ENCODE measurements at regions of chr1 and their contacts with region 1.

Region 1: GRCh38 chr1:170010443-170010842 is 64.1 kb downstream of the KIFAP3 start:
- DNase-seq: peak; percentile 48
- H3K4me3 ChIP-seq: no peak overlapping the region
- H3K27ac ChIP-seq: no peak overlapping the region
- H3K4me1 ChIP-seq: no peaks in the 10 kb centered on the region
- H3K27me3 ChIP-seq: no peaks in the 10 kb centered on the region
- CTCF ChIP-seq: no peak
- POLR2A ChIP-seq: no peak

Region 2: DNA sequence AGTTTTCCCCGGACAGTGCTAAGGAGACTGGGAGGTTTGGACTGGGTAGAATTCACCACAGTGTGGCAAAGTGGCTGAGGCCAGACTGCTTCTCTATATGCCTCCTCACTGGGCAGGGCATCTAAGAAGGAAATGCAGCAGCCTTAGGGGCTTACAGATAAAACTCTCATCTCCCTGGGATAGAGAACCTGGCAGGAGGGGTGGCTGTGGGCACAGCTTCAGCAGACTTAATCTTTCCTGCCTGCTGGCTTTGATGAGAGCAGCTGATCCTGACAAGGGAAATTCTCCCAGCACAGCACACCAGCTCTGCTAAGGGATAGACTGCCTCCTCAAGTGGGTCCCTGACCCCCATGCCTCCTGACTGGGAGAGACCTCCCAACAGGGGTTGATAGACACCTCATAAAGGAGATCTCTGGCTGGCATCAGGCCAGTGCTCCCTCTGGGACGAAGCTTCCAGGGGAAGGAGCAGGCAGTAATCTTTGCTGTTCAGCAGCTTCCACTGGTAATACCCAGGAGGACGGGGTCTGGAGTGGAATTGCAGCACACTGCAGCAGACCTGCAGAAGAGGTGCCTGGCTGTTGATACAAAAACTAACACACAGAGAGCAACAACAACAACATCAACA is 38.8 kb after region 1 on chr1:
- CTCF ChIA-PET with region 1: no interaction called
- POLR2A ChIA-PET with region 1: no interaction called
- dilution Hi-C with region 1: no loop called
- intact Hi-C with region 1: no loop called
- DNase-seq: no peak
- H3K4me3 ChIP-seq: no peak overlapping the region
- H3K27ac ChIP-seq: no peak overlapping the region
- H3K4me1 ChIP-seq: no peaks in the 10 kb centered on the region
- H3K27me3 ChIP-seq: no peaks in the 10 kb centered on the region
- CTCF ChIP-seq: no peak
- POLR2A ChIP-seq: no peak

Region 3: GRCh38 chr1:170881268-170882265 is 871.1 kb after region 1 on chr1:
- CTCF ChIA-PET with region 1: no interaction called
- POLR2A ChIA-PET with region 1: no interaction called
- dilution Hi-C with region 1: no loop called
- intact Hi-C with region 1: loop called (anchors 1 kb)
- DNase-seq: peak; percentile 39
- H3K4me3 ChIP-seq: no peak overlapping the region
- H3K27ac ChIP-seq: no peak overlapping the region
- H3K4me1 ChIP-seq: no peaks in the 10 kb centered on the region
- H3K27me3 ChIP-seq: no peaks in the 10 kb centered on the region
- CTCF ChIP-seq: peak in 1 of 2 donors; percentile 19
- POLR2A ChIP-seq: no peak

Measured in endothelial cell of umbilical vein (primary cell).